ENCODE measurements at regions of chr16 and their contacts with region 1.

Region 1: DNA sequence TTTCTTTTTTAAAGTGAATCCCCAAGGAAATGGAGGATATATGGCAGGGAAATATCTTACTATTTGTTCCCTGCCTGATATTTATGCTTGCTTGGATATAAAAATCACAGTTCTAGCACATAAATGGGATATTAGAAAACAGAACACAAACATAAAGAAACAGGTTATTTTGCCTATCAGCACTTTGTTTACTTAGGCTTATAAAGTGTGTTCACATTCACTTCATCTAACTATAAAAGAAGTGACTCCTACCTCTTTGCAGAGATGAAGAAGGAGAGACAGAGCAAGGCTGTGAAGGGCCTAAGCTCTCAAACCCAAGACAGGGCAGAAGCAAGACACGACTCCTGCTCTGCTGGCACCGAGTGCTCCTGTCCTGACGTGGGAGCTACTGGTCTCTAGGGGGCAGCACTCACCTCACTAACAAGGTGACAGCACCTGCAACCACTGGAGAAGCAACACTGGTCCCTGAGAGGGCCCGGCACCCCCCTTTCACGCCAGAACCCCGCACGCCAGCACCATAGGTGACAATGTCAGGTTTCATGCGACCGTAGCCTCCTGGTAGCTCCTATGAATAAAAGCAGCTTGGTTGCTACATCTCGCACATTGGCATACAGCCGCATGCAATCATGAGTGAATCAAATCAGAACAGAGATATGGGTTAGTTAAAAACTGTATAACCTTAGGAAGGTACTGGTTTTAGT is 32.0 kb downstream of the MBTPS1 start:
- DNase-seq: peak; percentile 58
- ATAC-seq: peak; percentile 45

Region 2: DNA sequence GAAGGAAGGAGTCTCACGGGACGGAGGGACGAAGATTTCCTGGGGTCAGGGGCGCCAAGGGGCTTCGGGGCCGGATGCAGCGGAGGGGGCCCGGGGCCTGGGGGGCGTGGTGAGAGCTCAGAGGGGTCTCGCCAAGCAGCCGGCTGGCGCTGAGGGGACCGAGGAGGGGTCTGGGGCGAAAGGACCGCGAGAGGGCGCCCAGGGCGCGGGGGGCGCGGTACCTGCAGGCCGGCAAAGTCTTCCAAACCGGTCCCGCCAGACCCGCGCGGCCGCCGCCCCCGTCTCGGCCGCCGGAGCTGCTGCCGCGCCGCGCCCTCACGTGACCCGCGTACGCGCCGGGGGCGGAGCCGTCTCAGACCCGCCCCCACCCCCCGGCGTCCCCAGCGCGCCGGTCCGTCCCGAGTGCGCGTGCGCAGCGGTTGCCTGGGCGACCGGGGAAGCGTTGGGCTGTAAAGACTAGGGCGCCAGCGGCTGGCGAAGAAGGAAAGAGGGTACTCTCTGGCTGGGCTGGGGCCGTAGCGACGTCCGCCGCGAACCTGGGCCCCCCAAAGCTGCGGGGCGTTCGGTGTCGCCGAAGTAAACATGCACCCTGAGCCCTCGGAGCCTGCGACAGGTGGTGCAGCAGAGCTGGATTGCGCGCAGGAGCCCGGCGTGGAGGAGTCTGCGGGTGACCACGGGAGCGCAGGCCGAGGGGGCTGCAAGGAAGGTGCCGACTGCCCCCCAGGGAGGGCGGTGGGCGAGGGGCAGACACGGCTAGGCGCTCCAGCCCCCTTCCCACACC is 60.3 kb after region 1 on chr16 and contains the starts of genes DNAAF1 and HSDL1:
- intact Hi-C with region 1: loop called (anchors 10 kb)
- DNase-seq: peak; percentile 93
- ATAC-seq: peak; percentile 98
- total RNA-seq, gene DNAAF1: not detected
- total RNA-seq, gene HSDL1: 22.6 TPM